SK-N-SH (cell line): ENCODE measurements at regions of chr1 and their contacts with region 1.

Region 1: GRCh38 chr1:17502326-17502778 is 37.1 kb upstream of the ARHGEF10L start:
- DNase-seq: peak; percentile 85
- H3K4me3 ChIP-seq: no peak overlapping the region
- H3K27ac ChIP-seq: no peak overlapping the region
- H3K4me1 ChIP-seq: peaks cover 0 to 2% of the 10 kb centered on the region in 2 experiments; a peak in 1 of 4 replicates
- H3K27me3 ChIP-seq: peaks cover 8% of the 10 kb centered on the region
- CTCF ChIP-seq: peak; percentile 89
- EP300 ChIP-seq: no peak
- RAD21 ChIP-seq: peak; percentile 92

Region 2: GRCh38 chr1:17348125-17348979 is 154.0 kb before region 1 on chr1:
- CTCF ChIA-PET with region 1: no interaction called
- POLR2A ChIA-PET with region 1: no interaction called
- DNase-seq: no peak
- H3K4me3 ChIP-seq: no peak overlapping the region
- H3K27ac ChIP-seq: no peak overlapping the region
- H3K4me1 ChIP-seq: no peaks in the 10 kb centered on the region
- H3K27me3 ChIP-seq: peaks cover 11% of the 10 kb centered on the region; the same call in 1 of the 2 replicates
- CTCF ChIP-seq: no peak
- EP300 ChIP-seq: no peak
- RAD21 ChIP-seq: no peak

Region 3: DNA sequence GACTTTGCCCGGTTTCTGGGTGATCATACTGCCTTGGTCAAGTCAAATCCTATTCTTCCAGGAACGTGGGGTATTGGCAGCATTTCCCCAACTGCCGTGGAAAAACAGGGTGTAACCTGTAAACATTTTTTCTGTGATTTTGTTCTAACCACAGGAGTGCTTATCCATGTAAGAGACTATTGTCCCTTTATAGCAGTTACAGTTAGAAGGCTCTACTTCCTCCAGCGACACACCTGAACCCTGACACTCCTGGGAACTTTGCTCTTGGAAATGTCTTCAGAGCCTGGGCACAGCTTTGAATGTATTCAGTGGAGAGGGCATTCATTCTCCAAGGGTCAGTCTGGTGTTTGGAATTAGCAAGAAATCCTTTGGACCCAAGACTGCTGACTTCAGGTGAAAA is 10.8 kb after region 1 on chr1:
- CTCF ChIA-PET with region 1: interaction called, 31 read pairs
- POLR2A ChIA-PET with region 1: interaction called, 3 read pairs
- DNase-seq: no peak
- H3K4me3 ChIP-seq: no peak overlapping the region
- H3K27ac ChIP-seq: no peak overlapping the region
- H3K4me1 ChIP-seq: no peaks in the 10 kb centered on the region
- H3K27me3 ChIP-seq: no peaks in the 10 kb centered on the region
- CTCF ChIP-seq: no peak
- EP300 ChIP-seq: no peak
- RAD21 ChIP-seq: no peak

Region 4: GRCh38 chr1:17525996-17526686 is 23.8 kb after region 1 on chr1:
- CTCF ChIA-PET with region 1: interaction called, 12 read pairs
- POLR2A ChIA-PET with region 1: no interaction called
- DNase-seq: no peak
- H3K4me3 ChIP-seq: no peak overlapping the region
- H3K27ac ChIP-seq: no peak overlapping the region
- H3K4me1 ChIP-seq: peaks cover 0 to 4% of the 10 kb centered on the region in 2 experiments; a peak in 1 of 4 replicates
- H3K27me3 ChIP-seq: no peaks in the 10 kb centered on the region
- CTCF ChIP-seq: no peak
- EP300 ChIP-seq: no peak
- RAD21 ChIP-seq: no peak

Region 5: GRCh38 chr1:17574516-17574915 is 72.2 kb after region 1 on chr1:
- CTCF ChIA-PET with region 1: interaction called, 24 read pairs
- POLR2A ChIA-PET with region 1: no interaction called
- DNase-seq: peak; percentile 57
- H3K4me3 ChIP-seq: no peak overlapping the region
- H3K27ac ChIP-seq: no peak overlapping the region
- H3K4me1 ChIP-seq: peaks cover 6 to 29% of the 10 kb centered on the region in 2 experiments; a peak in 2 of 4 replicates
- H3K27me3 ChIP-seq: no peaks in the 10 kb centered on the region
- CTCF ChIP-seq: no peak; the same call in 1 of the 2 replicates
- EP300 ChIP-seq: no peak
- RAD21 ChIP-seq: peak; percentile 38

Region 6: GRCh38 chr1:17587989-17588685 is 85.8 kb after region 1 on chr1:
- CTCF ChIA-PET with region 1: interaction called, 707 read pairs
- POLR2A ChIA-PET with region 1: no interaction called
- DNase-seq: peak; percentile 89
- H3K4me3 ChIP-seq: peak overlapping the region in 1 of 2 experiments; percentile 32; a peak in 2 of 4 replicates
- H3K27ac ChIP-seq: peak overlapping the region; percentile 82 to 90
- H3K4me1 ChIP-seq: peaks cover 18 to 66% of the 10 kb centered on the region in 2 experiments
- H3K27me3 ChIP-seq: no peaks in the 10 kb centered on the region
- CTCF ChIP-seq: no peak
- EP300 ChIP-seq: peak in 1 of 2 experiments; percentile 69; a peak in 2 of 4 replicates
- RAD21 ChIP-seq: no peak